ENCODE measurements at regions of chr12 and their contacts with region 1.

Region 1: DNA sequence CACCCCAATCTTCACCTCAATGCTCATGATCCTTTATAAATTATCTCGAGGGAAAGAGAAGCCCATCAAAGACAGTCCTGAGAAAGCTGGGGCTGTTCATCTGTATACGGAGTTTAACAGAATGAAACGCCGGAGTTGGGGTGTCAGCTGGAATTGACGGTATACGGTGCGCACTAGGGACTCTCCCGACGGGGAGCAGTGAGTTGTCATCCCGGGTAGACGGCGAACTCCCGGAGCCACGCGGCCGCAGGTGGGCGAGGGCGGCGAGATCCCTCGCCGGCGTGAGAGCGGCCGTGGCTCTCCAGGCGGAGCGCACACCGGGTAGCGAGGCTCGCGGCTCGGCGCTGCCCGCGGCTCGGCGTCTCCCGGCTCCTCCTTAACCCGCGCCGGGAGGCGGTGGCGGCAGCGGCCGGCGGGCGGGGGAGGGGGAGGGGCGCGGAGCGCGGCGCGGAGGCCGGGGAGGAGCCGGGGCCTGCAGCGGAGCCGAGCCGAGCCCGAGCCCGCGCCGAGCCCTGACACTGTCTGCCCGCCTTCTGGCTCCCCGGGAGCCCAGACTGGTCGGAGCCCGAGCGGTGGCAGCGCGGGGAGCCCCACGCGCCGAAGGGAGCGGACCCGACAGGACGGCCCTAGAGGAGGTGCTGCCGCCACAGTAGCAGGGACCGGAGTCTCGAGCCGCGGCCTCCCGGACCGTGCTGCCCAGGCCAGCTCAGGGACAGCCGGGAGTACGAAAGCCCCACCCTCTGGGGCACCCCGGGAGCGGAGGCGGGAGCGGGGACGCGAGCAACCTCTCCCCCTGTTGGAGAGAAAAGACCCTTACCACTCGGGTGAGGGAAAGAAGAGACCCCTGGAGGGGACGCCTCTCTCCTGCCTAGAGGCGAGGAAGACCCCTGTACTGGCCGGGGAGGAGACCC is at the start of gene FOXJ2:
- DNase-seq: peak; percentile 92
- total RNA-seq, gene FOXJ2: 25.1 TPM

Region 2: GRCh38 chr12:7959701-7960121 is 72.8 kb before region 1 on chr12:
- intact Hi-C with region 1: no loop called
- DNase-seq: peak; percentile 85

Region 3: DNA sequence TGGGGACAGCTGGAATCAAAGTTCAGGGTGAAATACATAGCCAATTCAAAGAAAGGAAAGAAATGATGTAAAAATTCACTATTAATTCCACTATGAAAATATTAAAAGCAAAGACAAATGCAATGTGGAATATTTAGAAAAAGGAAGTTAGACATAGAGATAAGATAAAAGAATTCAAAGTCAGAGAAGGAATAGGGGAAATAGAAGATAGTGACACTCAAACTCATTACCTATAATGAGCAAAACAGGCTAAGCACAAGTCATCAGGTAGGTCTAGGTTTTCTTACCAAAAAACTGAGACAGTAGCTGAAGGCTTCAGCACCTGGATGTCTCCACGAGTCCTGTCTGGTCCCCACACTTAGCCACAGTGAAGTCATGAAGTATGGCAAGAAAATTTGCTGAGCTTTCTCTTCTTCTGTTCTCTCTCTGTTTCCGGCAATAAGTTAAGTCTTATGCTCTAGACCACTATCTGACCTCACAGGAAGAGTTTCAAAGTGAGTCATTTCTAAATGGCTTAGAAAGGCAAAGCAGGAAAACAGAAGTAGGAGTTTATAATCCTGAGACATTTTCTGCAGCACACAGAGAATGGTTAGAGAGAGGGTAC is 33.6 kb after region 1 on chr12 and contains the start of gene C3AR1:
- intact Hi-C with region 1: no loop called
- DNase-seq: no peak
- total RNA-seq, gene C3AR1: 4.2 TPM

Region 4: GRCh38 chr12:8081251-8081920 is 48.9 kb after region 1 on chr12:
- intact Hi-C with region 1: loop called (anchors 2 kb)
- DNase-seq: no peak

Measured in cardiac septum (tissue), 1 donor.